Esophagus muscularis mucosa (tissue), 4 donors: ENCODE measurements at regions of chr7 and their contacts with region 1.

Region 1: GRCh38 chr7:29408841-29409243 is 154.8 kb upstream of the PRR15 start:
- DNase-seq: no peak
- H3K4me3 ChIP-seq: no peak overlapping the region
- H3K27ac ChIP-seq: no peak overlapping the region
- H3K4me1 ChIP-seq: no peaks in the 10 kb centered on the region
- H3K27me3 ChIP-seq: no peaks in the 10 kb centered on the region
- CTCF ChIP-seq: peak; percentile 85 to 91 (median 86)
- EP300 ChIP-seq: no peak
- POLR2A ChIP-seq: no peak

Region 2: DNA sequence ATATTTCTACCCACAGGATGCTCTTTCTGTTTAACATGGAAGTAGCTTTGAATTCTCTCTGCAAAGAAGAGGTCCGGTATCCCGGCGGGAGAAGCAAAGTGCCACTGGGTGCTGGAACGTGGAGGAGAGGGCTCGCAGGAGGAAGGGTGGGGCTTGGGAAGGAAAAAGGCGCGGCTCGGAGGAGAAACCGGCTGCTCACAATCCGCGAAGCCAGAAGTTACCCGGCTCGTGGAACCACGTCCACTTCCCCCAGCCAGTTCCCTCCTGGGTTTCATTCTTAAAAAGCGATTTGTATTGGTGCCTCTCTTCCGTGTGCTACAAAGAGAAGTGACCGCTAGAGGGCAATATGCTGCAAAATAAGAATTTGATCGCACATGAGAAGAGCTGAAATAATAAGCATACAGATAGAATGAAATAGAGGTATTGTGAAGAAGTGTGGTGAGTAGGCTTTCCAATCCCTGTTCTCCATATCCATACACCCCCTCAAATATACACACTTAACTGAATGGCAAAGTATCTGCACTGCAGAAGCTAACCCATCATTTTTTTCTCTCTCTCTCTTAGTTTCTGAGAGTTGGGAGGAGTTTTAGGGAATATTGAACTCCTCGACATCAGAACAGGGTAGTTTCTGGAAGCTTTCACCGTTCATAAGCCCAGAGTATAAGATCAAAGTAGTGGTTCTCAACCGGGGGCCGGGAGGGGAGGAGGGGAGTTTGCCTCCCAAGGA is 481.8 kb before region 1 on chr7:
- intact Hi-C with region 1: loop called (anchors 2 kb)
- DNase-seq: no peak
- H3K4me3 ChIP-seq: peak overlapping the region; percentile 50 to 57 (median 54)
- H3K27ac ChIP-seq: peak overlapping the region in 3 of 4 donors; percentile 34 to 57 (median 36)
- H3K4me1 ChIP-seq: peaks cover 13 to 21% (median 20%) of the 10 kb centered on the region in 4 donors
- H3K27me3 ChIP-seq: peaks cover 0 to 6% (median 0%) of the 10 kb centered on the region in 4 donors
- CTCF ChIP-seq: peak; percentile 79 to 89 (median 85)
- EP300 ChIP-seq: no peak
- POLR2A ChIP-seq: no peak

Region 3: GRCh38 chr7:29035044-29035740 is 373.6 kb before region 1 on chr7:
- intact Hi-C with region 1: no loop called
- DNase-seq: no peak
- H3K4me3 ChIP-seq: no peak overlapping the region
- H3K27ac ChIP-seq: no peak overlapping the region
- H3K4me1 ChIP-seq: peaks cover 0 to 13% (median 10%) of the 10 kb centered on the region in 4 donors
- H3K27me3 ChIP-seq: no peaks in the 10 kb centered on the region
- CTCF ChIP-seq: no peak
- EP300 ChIP-seq: no peak
- POLR2A ChIP-seq: no peak

Region 4: DNA sequence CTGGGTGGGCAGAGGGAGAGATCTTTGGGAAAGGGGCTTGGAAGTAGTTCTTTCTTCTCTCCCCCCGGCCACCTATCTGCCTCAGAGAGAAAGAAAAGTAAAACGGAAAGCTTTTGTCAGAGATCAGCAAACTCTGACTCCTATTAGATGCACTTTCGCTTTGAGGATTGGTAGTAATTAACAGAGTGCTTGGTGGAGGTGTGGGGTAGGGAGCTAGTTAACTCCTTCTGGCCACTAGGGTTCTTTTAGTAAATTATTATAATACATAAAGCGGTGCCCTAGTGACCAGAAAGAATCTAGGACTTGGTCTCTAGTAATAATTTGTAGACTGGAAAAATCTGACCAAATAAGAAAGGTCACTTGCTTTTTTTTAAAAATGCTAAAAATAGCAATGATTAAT is 317.1 kb before region 1 on chr7:
- intact Hi-C with region 1: no loop called
- DNase-seq: no peak
- H3K4me3 ChIP-seq: peak overlapping the region; percentile 31 to 48 (median 42)
- H3K27ac ChIP-seq: peak overlapping the region; percentile 66 to 71 (median 66)
- H3K4me1 ChIP-seq: peaks cover 9 to 34% (median 19%) of the 10 kb centered on the region in 4 donors
- H3K27me3 ChIP-seq: peaks cover 0 to 8% (median 0%) of the 10 kb centered on the region in 4 donors
- CTCF ChIP-seq: no peak
- EP300 ChIP-seq: no peak
- POLR2A ChIP-seq: no peak

Region 5: DNA sequence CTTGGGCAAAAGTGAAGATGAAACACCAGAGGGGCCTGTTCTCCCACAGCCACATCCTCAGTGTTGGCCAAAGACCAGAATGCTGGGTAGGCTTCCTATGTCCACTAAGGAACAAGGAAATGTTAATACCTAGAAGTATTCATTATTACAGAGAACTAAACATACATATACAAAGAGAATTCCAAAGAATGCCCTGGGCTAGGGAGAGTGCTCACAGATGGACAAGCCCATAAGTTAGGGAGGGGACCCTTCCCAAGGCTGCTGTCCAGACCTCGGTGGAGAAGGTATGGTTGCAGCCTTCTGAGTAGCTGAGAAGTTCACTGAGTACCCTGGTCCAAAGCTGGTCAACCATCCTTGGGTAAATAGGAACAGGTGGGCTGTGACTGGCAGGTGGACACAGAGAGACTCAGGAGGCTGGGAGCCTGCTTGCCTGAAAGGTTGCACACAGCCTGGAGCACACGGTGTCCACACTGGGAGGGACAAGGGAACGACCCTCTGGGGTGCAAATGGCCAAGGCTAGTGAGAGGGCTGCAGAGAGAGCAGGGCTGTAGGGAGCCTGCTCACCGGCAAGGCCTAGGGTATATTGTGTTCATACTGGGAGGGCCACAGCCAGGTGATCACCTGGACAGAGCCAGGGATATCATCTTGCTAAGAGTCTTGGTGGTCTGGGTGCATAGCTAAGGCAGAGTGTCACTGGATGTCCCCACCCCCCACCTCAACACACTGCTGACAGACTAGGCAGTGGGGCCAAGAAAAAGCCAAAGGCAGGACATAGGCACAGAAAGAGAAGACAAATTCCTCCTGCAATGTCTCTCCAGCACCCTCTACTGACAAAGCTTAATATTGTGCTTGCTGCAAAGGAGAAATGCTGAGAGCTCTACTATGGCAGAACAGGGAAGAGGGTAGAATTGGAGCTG is 302.8 kb before region 1 on chr7:
- intact Hi-C with region 1: loop called (anchors 5 kb)
- DNase-seq: no peak
- H3K4me3 ChIP-seq: no peak overlapping the region
- H3K27ac ChIP-seq: no peak overlapping the region
- H3K4me1 ChIP-seq: peaks cover 0 to 2% (median 0%) of the 10 kb centered on the region in 4 donors
- H3K27me3 ChIP-seq: no peaks in the 10 kb centered on the region
- CTCF ChIP-seq: peak; percentile 72 to 87 (median 74)
- EP300 ChIP-seq: no peak
- POLR2A ChIP-seq: no peak

Region 6: DNA sequence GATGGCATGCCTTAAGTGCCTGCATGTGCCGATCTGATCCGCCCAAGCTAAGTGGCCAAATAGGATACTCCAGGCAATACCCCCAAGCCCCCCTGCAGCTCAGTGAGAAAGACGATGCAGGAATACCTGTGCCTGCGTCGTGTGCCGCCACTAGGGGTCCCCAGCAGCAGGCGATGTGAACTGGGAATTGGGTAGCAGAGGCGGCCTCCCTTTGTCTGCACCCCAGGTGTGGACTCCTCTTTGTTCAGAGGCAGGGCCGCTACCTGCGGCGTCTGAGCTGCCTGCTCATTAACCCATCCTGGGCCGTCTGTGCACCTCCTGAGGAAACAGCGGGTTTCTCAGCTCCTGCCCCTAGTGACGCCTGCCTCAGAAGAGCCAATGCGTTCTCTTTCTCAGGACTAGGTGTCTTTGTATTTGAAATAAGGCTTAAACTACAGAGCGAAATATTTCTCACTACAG is 219.1 kb before region 1 on chr7:
- intact Hi-C with region 1: loop called (anchors 2 kb)
- DNase-seq: peak; percentile 90
- H3K4me3 ChIP-seq: no peak overlapping the region
- H3K27ac ChIP-seq: no peak overlapping the region
- H3K4me1 ChIP-seq: peaks cover 9 to 21% (median 14%) of the 10 kb centered on the region in 4 donors
- H3K27me3 ChIP-seq: peaks cover 0 to 44% (median 2%) of the 10 kb centered on the region in 4 donors
- CTCF ChIP-seq: peak; percentile 54 to 80 (median 59)
- EP300 ChIP-seq: no peak
- POLR2A ChIP-seq: no peak

Region 7: GRCh38 chr7:29548823-29549222 is 140.0 kb after region 1 on chr7:
- intact Hi-C with region 1: no loop called
- DNase-seq: no peak
- H3K4me3 ChIP-seq: no peak overlapping the region
- H3K27ac ChIP-seq: no peak overlapping the region
- H3K4me1 ChIP-seq: no peaks in the 10 kb centered on the region
- H3K27me3 ChIP-seq: no peaks in the 10 kb centered on the region
- CTCF ChIP-seq: no peak
- EP300 ChIP-seq: no peak
- POLR2A ChIP-seq: no peak